Caco-2 (cell line): ENCODE measurements at regions of chr15 and their contacts with region 1.

Region 1: GRCh38 chr15:92683232-92683834 is 27.8 kb upstream of the FAM174B start:
- DNase-seq: peak; percentile 48 to 60
- H3K4me3 ChIP-seq: no peak overlapping the region
- H3K4me3 Mint-ChIP-seq: no peak overlapping the region
- H3K27ac Mint-ChIP-seq: peak overlapping the region; percentile 54
- H3K4me1 ChIP-seq: peaks cover 21% of the 10 kb centered on the region
- H3K4me1 Mint-ChIP-seq: peaks cover 33% of the 10 kb centered on the region
- H3K27me3 ChIP-seq: no peaks in the 10 kb centered on the region
- H3K27me3 Mint-ChIP-seq: no peaks in the 10 kb centered on the region
- CTCF ChIP-seq: peak; percentile 37 to 64

Region 2: GRCh38 chr15:92521624-92522008 is 161.7 kb before region 1 on chr15:
- CTCF ChIA-PET with region 1: interaction called, 3 read pairs
- POLR2A ChIA-PET with region 1: no interaction called
- intact Hi-C with region 1: loop called (anchors 1 kb)
- DNase-seq: peak; percentile 71 to 76
- H3K4me3 ChIP-seq: no peak overlapping the region
- H3K4me3 Mint-ChIP-seq: no peak overlapping the region
- H3K27ac Mint-ChIP-seq: no peak overlapping the region
- H3K4me1 ChIP-seq: no peaks in the 10 kb centered on the region
- H3K4me1 Mint-ChIP-seq: peaks cover 9% of the 10 kb centered on the region
- H3K27me3 ChIP-seq: no peaks in the 10 kb centered on the region
- H3K27me3 Mint-ChIP-seq: no peaks in the 10 kb centered on the region
- CTCF ChIP-seq: peak; percentile 62 to 72

Region 3: DNA sequence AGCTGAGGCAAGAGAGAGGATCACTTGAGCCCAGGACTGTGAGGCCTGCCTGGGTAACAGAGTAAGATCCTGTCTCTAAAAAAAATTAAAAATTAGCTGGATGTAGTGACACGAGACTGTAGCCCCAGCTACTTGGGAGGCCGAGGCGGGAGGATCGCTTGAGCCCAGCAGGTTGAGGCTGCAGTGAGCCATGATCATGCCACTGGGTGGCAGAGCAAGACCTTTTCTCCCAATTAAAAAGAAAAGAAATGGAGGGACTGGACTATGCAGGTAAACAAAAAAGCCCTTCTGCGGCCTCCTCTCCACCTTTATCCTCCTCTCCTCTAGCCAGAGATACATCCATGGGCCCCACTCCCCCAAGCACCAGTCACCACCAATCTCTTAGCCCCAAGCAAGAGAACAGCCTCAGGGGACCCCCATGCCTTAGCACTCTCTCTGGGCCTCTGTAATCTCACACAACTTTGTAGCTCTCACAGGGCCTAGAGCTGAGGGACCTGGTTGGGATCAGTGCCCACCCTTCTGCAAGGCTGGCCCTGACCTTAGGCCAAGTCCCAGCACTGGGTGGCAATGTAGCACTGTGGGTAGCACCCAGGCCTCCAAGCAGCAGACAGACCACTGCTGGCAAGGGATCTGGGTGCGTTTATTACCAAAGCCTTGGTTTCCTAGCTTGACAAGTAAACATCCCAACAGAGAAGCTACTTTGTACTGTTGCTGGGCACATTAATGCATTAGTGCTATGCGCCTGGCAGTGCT is 71.2 kb before region 1 on chr15:
- CTCF ChIA-PET with region 1: interaction called, 3 read pairs
- POLR2A ChIA-PET with region 1: no interaction called
- intact Hi-C with region 1: loop called (anchors 1 kb)
- DNase-seq: no peak
- H3K4me3 ChIP-seq: no peak overlapping the region
- H3K4me3 Mint-ChIP-seq: no peak overlapping the region
- H3K27ac Mint-ChIP-seq: no peak overlapping the region
- H3K4me1 ChIP-seq: peaks cover 12% of the 10 kb centered on the region
- H3K4me1 Mint-ChIP-seq: peaks cover 3% of the 10 kb centered on the region
- H3K27me3 ChIP-seq: no peaks in the 10 kb centered on the region
- H3K27me3 Mint-ChIP-seq: no peaks in the 10 kb centered on the region
- CTCF ChIP-seq: no peak

Region 4: DNA sequence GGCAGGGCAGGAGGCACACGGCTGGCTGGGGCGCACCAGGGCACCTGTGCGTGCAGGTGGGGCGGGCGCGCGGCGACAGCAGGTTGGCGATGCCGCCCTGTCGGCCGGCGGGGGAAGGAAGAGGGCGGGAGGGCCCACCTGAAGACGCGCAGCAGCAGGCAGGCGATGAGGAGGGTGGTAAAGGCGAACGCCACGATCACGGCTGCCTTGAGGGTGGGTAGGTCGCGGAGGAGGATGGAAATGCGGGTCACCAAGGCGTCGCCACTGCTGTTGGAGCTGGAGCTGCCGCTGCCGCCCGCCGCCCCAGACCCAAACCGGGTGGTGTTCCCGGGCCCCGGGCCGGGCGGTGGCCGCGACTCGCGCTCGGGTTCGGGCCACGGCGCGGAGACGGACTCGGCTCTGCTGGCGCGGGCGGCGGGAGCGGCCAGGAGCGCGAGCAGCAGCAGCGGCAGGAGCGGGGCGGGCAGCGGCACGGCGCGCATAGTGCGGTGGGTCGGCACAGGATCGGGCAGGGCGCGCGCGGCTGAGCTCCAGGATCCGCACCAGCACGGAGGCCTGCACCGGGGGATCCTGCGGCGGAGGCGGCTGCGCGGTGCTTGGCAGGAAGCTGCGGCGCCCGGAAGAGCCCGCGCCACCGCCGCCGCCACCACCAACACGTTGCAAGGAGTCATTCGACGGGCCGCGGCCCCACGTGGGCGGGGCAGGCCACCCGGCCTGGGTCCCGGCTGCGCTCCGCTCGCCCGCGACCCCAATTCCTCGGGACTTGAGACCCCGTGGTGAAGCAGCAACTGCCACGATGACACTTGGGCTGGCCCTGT is 27.9 kb before region 1 on chr15 and contains the start of gene FAM174B:
- CTCF ChIA-PET with region 1: interaction called, 3 read pairs
- POLR2A ChIA-PET with region 1: no interaction called
- intact Hi-C with region 1: loop called (anchors 1 kb)
- DNase-seq: peak in 1 of 2 experiments; percentile 69
- H3K4me3 ChIP-seq: peak within 1 kb of the TSS; percentile 86
- H3K4me3 Mint-ChIP-seq: peak within 1 kb of the TSS; percentile 89
- H3K27ac Mint-ChIP-seq: peak within 1 kb of the TSS; percentile 85
- H3K4me1 ChIP-seq: peaks cover 59% of the 10 kb centered on the region
- H3K4me1 Mint-ChIP-seq: peaks cover 33% of the 10 kb centered on the region
- H3K27me3 ChIP-seq: no peaks in the 10 kb centered on the region
- H3K27me3 Mint-ChIP-seq: no peaks in the 10 kb centered on the region
- CTCF ChIP-seq: no peak
- total RNA-seq, gene FAM174B: 79.4 and 87.5 TPM in 2 replicates

Region 5: DNA sequence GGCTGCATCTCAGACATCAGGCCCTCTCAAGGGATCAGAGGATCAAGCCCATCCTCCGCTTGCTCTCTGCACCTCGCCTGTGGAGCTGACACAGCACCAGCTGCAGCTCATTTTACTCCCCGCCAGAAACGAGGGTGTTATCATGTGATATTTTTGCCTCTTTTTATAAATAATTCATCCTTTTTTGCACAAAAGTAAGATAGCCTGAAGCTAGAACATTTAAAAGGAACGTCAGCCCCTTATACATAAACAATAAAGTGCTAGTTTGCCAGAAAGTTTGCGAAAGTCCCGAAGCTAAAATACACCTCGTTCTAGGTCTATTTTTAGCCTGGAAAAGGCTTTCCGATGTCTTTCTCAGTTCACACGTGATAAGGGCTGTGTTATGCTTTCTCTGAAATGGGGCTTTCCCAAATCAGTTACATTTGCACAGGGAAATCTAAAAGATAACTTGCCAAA is 18.2 kb before region 1 on chr15:
- CTCF ChIA-PET with region 1: no interaction called
- POLR2A ChIA-PET with region 1: no interaction called
- intact Hi-C with region 1: loop called (anchors 1 kb)
- DNase-seq: no peak
- H3K4me3 ChIP-seq: no peak overlapping the region
- H3K4me3 Mint-ChIP-seq: peak overlapping the region; percentile 25
- H3K27ac Mint-ChIP-seq: peak overlapping the region; percentile 44
- H3K4me1 ChIP-seq: peaks cover 80% of the 10 kb centered on the region
- H3K4me1 Mint-ChIP-seq: peaks cover 56% of the 10 kb centered on the region
- H3K27me3 ChIP-seq: no peaks in the 10 kb centered on the region
- H3K27me3 Mint-ChIP-seq: no peaks in the 10 kb centered on the region
- CTCF ChIP-seq: no peak

Region 6: DNA sequence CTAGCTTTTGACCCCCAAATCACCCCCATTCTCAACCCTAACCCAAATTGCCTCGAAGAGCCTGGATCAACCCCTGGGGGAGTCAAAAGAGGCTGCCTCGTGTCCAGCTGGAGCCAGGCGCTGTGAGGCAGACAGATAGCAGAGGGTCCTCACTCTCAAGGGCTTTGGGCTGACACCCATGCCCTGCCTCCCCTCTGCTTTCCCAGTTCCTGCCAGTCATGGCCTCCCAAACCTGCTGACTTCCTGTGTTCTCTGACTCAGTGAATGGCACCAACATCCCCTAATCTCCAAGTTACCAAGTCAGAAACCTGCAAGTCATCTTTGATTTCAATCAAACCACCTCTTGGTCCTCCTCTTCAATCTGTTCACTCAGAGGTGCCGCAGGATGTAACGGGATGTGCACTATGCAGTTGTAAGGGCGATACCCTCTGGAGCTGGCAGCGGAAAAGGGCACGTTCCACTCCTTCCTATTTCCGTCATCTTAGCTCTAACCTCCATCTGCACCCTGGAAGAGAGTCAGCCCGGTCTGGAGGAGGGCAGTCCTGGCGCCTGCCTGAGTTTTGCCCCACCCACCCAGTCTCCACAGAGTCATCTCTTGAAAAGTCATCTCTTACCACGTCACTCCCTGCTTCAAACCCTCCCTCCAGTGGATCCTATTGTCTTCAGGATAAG is 24.7 kb after region 1 on chr15:
- CTCF ChIA-PET with region 1: no interaction called
- POLR2A ChIA-PET with region 1: no interaction called
- intact Hi-C with region 1: no loop called
- DNase-seq: no peak
- H3K4me3 ChIP-seq: no peak overlapping the region
- H3K4me3 Mint-ChIP-seq: no peak overlapping the region
- H3K27ac Mint-ChIP-seq: no peak overlapping the region
- H3K4me1 ChIP-seq: no peaks in the 10 kb centered on the region
- H3K4me1 Mint-ChIP-seq: no peaks in the 10 kb centered on the region
- H3K27me3 ChIP-seq: no peaks in the 10 kb centered on the region
- H3K27me3 Mint-ChIP-seq: no peaks in the 10 kb centered on the region
- CTCF ChIP-seq: no peak